ENCODE measurements at regions of chr7 and their contacts with region 1.

Region 1: GRCh38 chr7:51246258-51247245 is 70.1 kb downstream of the COBL start:
- DNase-seq: peak; percentile 56 to 90 (median 72)

Region 2: GRCh38 chr7:51209426-51209825 is 37.1 kb before region 1 on chr7:
- intact Hi-C with region 1: no loop called
- DNase-seq: no peak

Region 3: DNA sequence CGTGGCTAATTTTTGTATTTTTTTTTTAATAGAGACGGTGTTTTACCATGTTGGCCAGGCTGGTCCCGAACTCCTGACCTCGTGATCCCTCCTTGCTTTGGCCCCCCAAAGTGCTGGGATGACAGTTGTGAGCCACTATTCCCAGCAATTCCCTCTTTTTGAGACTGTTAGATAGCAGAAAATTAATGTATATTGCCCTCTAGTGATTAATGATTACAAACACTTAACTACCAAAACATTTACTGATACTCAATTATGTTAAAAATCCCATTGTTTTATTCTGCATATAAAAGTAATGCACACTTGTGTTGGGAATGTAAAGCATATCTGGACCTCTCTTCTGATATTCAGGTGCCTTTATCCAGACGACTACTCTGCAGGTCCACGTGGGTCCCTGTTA is 111.3 kb after region 1 on chr7:
- intact Hi-C with region 1: loop called (anchors 5 kb)
- DNase-seq: peak in 1 of 42 donors; percentile 13